WTC11 (cell line): ENCODE measurements at regions of chr21 and their contacts with region 1.

Region 1: DNA sequence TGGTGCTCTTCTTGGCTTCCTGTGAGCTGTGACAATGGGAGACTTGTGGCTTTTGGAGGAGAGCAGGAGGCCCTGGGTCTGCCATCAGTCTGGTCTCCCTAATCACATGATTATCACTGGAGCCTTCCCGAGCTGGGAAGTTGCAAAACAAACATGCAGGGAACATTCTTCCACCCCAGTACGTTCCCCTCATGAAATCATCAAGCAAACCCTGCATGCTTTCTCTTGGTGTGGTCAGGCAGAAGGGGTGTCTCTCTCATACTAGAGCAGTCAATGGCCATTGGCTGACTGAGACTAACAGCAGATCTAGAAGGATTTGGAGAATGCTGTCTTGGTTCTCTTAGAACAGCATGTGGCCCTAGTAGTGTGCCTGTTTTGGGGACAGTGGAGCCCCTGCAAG is 111.2 kb downstream of the LIPI start:
- DNase-seq: no peak
- ATAC-seq: no peak
- H3K4me3 Mint-ChIP-seq: no peak overlapping the region
- H3K27ac Mint-ChIP-seq: no peak overlapping the region
- H3K4me1 Mint-ChIP-seq: peaks cover 29% of the 10 kb centered on the region
- H3K27me3 Mint-ChIP-seq: no peaks in the 10 kb centered on the region
- CTCF ChIP-seq: no peak

Region 2: GRCh38 chr21:14070020-14070893 is 29.3 kb before region 1 on chr21:
- CTCF ChIA-PET with region 1: no interaction called
- POLR2A ChIA-PET with region 1: no interaction called
- DNase-seq: no peak
- ATAC-seq: peak; percentile 34
- H3K4me3 Mint-ChIP-seq: no peak overlapping the region
- H3K27ac Mint-ChIP-seq: peak overlapping the region; percentile 7; the same call in 1 of the 2 replicates
- H3K4me1 Mint-ChIP-seq: no peaks in the 10 kb centered on the region
- H3K27me3 Mint-ChIP-seq: no peaks in the 10 kb centered on the region
- CTCF ChIP-seq: no peak

Region 3: DNA sequence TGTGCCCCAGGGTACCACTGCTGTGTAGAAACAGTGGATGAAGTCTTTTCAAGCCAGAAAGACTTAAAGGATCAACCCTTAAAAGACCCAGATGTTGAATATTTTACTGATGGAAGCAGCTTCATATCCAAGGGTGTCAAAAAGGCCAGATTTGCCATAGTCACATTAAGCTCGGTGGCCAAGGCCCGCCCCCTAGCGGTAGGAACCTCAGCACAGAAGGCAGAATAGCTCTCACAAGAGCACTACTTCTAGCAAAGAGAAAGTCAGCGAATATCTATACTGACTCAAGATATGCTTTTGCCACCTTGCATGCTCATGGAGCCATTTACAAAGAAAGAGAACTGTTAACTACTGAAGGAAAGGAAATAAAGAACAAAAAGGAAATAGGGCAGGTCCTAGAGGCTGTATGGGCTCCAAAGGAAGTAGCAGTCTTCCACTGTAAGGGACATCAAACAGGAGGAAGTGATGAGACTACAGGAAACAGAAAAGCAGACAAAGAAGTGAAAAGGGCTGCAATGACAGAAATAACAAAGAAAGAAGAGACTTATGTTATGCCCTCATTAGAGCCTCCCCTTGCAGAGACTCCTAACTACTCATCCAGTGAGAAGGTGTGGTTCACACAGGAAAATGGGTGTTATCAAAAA is 20.6 kb after region 1 on chr21:
- CTCF ChIA-PET with region 1: interaction called, 18 read pairs
- POLR2A ChIA-PET with region 1: no interaction called
- DNase-seq: peak; percentile 73
- ATAC-seq: peak; percentile 65
- H3K4me3 Mint-ChIP-seq: no peak overlapping the region
- H3K27ac Mint-ChIP-seq: no peak overlapping the region
- H3K4me1 Mint-ChIP-seq: peaks cover 12% of the 10 kb centered on the region; the same call in 1 of the 2 replicates
- H3K27me3 Mint-ChIP-seq: peaks cover 4% of the 10 kb centered on the region; the same call in 1 of the 2 replicates
- CTCF ChIP-seq: peak; percentile 80